GM18951 (cell line): ENCODE measurements at regions of chr3 and their contacts with region 1.

Region 1: GRCh38 chr3:122258757-122259371 is 66.2 kb upstream of the CSTA start:
- POLR2A ChIP-seq: no peak

Region 2: DNA sequence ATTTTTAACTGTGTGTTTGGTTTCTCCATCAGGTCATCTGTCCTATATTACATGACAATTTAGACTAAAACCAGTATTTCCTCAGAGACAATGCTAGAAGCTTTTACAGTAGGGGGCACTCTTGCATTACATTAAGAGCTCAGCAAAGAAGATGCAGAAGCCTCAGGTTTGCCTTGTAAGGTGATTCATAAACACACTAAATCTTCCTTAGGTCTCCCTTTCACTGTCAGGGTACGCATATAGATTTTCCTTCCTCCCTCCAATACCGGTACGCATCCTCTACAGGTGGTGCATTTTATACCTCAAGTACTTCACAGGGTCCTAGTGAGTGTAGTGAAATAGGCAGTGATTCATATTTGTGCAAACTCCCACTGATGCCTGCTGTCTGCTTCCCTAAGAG is 157.2 kb before region 1 on chr3:
- in situ Hi-C with region 1: loop called (anchors 10 kb)
- POLR2A ChIP-seq: no peak